ENCODE measurements at regions of chr4 and their contacts with region 1.

Region 1: DNA sequence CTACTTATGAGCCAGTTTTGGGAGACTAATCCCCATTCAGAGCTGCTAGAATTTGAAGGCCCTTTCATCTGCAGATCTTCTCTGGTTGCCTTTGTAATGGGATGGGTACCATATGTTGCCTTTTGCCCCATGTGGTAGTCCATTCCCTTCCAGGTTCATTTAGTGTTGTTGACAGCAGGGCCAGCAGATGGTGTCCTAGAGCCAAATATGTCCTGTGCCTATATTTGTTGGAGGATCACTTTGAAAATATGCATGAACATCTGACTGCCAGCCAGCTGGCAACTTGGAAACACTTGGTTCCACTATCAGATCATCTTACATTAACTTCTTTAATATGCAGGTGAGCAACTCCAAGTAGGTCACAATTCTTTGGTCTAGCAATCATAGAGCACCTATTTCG is 30.4 kb downstream of the CFAP299 start:
- DNase-seq: peak; percentile 26
- ATAC-seq: peak; percentile 91
- H3K4me3 ChIP-seq: no peak overlapping the region
- H3K27ac ChIP-seq: no peak overlapping the region
- H3K4me1 ChIP-seq: no peaks in the 10 kb centered on the region
- H3K27me3 ChIP-seq: no peaks in the 10 kb centered on the region
- CTCF ChIP-seq: peak; percentile 62 to 73 (median 67)
- EP300 ChIP-seq: no peak
- POLR2A ChIP-seq: no peak
- RAD21 ChIP-seq: peak; percentile 85

Region 2: DNA sequence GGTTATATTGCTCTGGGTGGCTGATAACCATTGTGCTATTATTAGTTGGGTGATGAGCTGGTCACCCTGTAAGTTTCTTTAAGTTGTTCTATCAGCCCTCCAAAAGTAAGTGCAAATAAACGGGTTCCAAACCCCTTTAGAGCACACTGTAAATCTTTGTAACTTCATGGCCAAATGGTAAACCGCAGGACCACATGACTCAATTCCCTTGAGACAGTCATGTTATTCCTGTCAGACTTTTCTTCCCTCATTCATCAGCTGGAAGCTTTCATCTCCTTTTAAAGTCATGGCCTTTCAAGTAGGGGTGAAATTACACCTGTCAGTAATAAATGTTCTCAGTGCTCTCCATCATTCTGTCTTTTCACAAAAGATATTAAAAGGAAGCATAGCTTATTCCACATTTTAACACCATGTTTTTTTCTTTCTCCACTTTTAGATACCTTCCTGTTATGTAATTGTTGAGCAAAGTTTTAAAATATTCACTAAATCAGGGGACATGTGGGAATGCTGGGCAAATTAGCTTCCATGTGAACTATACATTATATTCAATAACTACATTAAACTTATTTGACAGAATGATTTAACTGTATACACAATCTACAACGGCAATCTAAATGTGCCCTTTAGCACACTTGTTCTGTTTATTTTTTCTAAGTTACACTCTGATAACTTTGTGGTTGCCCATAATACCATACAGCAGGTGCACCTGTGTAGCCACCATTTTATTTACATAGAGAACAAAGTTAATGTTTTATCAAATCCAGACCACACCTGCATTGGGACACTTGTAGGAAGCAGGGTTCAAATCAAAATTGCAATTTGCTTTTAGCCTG is 245.1 kb after region 1 on chr4:
- CTCF ChIA-PET with region 1: interaction called, 4 read pairs
- POLR2A ChIA-PET with region 1: no interaction called
- RAD21 ChIA-PET with region 1: interaction called, 4 read pairs
- SMC1A ChIA-PET with region 1: interaction called, 3 read pairs
- in situ Hi-C with region 1: no loop called
- intact Hi-C with region 1: loop called (anchors 2 kb)
- DNase-seq: peak; percentile 63
- ATAC-seq: peak; percentile 94
- H3K4me3 ChIP-seq: no peak overlapping the region
- H3K27ac ChIP-seq: no peak overlapping the region
- H3K4me1 ChIP-seq: 0 out of 2 replicates have a peak, but pooled peaks cover 6% of the 10 kb centered on the region
- H3K27me3 ChIP-seq: no peaks in the 10 kb centered on the region
- CTCF ChIP-seq: no peak
- EP300 ChIP-seq: peak; percentile 56 to 65; a peak in 2 of 4 replicates
- POLR2A ChIP-seq: no peak
- RAD21 ChIP-seq: no peak

Region 3: GRCh38 chr4:80876810-80877209 is 510.9 kb after region 1 on chr4:
- CTCF ChIA-PET with region 1: no interaction called
- POLR2A ChIA-PET with region 1: no interaction called
- RAD21 ChIA-PET with region 1: interaction called, 3 read pairs
- SMC1A ChIA-PET with region 1: interaction called, 3 read pairs
- in situ Hi-C with region 1: no loop called
- intact Hi-C with region 1: loop called (anchors 10 kb)
- DNase-seq: peak; percentile 73
- ATAC-seq: peak; percentile 81
- H3K4me3 ChIP-seq: no peak overlapping the region
- H3K27ac ChIP-seq: peak overlapping the region; percentile 35
- H3K4me1 ChIP-seq: peaks cover 13% of the 10 kb centered on the region
- H3K27me3 ChIP-seq: no peaks in the 10 kb centered on the region
- CTCF ChIP-seq: no peak
- EP300 ChIP-seq: peak; percentile 45 to 85; a peak in 2 of 4 replicates
- POLR2A ChIP-seq: no peak
- RAD21 ChIP-seq: peak; percentile 15; the same call in 1 of the 2 replicates

Region 4: DNA sequence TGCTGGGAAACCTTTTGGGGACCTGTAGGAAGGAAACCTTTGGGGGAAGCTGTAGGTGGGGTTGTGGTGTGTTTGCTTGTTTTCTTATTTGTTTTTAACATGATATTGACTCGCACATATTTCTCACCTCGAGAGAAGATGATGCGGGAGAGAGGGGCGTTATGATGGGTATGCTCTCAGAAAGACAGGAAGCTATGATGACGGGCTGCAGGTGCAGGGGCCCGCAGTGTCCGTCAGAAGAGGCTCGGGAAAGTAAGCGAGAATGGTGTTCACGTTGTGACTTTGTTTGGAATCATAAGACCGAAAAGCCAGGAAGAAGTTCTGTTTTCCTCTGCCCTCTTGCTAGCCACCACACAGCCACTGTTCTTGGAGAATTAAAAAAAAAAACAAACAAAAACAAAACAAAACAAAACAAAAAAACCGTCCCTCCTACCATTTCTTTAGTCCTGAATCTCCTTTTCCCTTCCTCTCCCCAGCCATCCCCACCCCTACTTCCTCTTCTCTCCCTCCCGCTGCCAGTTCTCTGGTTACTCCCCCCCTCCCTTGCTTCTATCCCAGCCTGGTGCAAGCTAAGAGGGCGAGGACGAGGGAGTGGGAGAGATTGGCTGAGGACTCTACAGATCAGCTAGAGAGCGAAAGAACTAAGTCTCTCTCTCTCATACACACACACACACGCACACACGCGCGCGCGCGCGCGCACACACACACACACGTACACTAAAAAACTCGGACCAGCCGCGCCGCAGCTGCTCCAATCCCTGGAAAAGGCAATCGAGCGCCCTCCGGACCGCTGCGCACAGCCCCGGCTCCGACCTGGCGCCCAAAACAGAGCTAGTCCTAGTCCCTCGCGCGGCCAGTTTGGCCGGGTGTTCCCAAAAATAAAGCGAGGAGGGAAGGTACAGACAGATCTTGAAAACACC is 664.4 kb after region 1 on chr4 and contains the start of gene BMP3:
- CTCF ChIA-PET with region 1: interaction called, 268 read pairs
- POLR2A ChIA-PET with region 1: no interaction called
- RAD21 ChIA-PET with region 1: interaction called, 8 read pairs
- SMC1A ChIA-PET with region 1: interaction called, 15 read pairs
- in situ Hi-C with region 1: no loop called
- intact Hi-C with region 1: no loop called
- DNase-seq: no peak
- ATAC-seq: peak; percentile 61
- H3K4me3 ChIP-seq: peak within 1 kb of the TSS; percentile 65
- H3K27ac ChIP-seq: no peak within 1 kb of the TSS
- H3K4me1 ChIP-seq: no peaks in the 10 kb centered on the region
- H3K27me3 ChIP-seq: peaks cover 6 to 7% of the 10 kb centered on the region in 2 experiments; a peak in 3 of 4 replicates
- CTCF ChIP-seq: no peak
- EP300 ChIP-seq: no peak
- POLR2A ChIP-seq: no peak
- RAD21 ChIP-seq: no peak
- polyA plus RNA-seq, gene BMP3: 0.37 to 1.3 TPM

Region 5: DNA sequence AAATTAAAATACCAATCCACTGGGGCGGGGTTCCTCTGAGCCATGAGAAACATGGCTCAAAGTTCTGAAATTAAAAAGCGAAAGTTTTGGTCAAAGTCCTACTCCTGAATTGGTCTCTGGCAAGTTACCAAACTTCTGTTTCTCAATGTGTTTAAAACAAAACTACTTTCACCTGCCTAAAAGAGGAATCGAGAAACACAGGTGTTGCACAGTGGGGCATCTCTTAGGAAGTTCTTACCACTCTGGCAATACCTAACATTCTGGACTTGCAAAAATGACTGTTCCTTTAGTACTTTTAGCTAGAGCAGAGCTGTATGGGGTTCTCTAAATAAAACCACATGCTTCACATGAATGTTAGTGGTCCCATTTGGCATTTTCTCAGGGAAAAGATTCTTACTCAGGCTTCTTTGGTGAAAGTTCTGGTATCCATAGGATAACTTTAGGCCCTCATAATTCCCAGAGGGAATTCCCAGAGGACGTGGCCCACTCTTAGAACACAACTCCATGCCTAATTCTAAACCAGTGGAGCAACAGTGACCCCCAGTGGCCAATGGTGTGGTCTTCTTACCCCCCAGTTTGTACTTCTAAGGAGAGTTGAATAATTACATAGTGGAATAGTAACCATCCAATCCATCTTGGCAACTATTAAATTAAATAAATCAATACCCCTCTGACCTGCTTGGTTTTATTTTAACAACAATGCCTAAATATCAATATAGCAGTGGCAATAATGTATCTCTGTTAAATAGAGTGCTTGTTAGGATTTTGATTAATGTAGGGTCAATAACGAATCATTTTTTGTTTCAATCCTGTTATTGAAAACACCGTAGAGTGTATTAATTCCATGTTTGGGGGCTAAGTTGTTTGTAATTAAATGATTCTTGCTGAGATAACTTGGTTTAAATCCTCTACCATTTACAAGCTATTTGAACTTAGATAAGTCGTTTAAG is 686.5 kb after region 1 on chr4:
- CTCF ChIA-PET with region 1: interaction called, 117 read pairs
- POLR2A ChIA-PET with region 1: no interaction called
- RAD21 ChIA-PET with region 1: interaction called, 38 read pairs
- SMC1A ChIA-PET with region 1: interaction called, 32 read pairs
- in situ Hi-C with region 1: no loop called
- intact Hi-C with region 1: loop called (anchors 1 kb)
- DNase-seq: peak; percentile 91
- ATAC-seq: peak; percentile 99
- H3K4me3 ChIP-seq: no peak overlapping the region
- H3K27ac ChIP-seq: no peak overlapping the region; the same call in 1 of the 2 replicates
- H3K4me1 ChIP-seq: peaks cover 14% of the 10 kb centered on the region
- H3K27me3 ChIP-seq: no peaks in the 10 kb centered on the region
- CTCF ChIP-seq: peak; percentile 61 to 73 (median 66)
- EP300 ChIP-seq: peak; percentile 84 to 91; a peak in 3 of 4 replicates
- POLR2A ChIP-seq: no peak
- RAD21 ChIP-seq: peak; percentile 76

Region 6: GRCh38 chr4:81260443-81261101 is 894.6 kb after region 1 on chr4:
- CTCF ChIA-PET with region 1: interaction called, 3 read pairs
- POLR2A ChIA-PET with region 1: no interaction called
- RAD21 ChIA-PET with region 1: no interaction called
- SMC1A ChIA-PET with region 1: interaction called, 5 read pairs
- in situ Hi-C with region 1: no loop called
- intact Hi-C with region 1: loop called (anchors 10 kb)
- DNase-seq: no peak
- ATAC-seq: peak; percentile 46
- H3K4me3 ChIP-seq: no peak overlapping the region
- H3K27ac ChIP-seq: no peak overlapping the region
- H3K4me1 ChIP-seq: no peaks in the 10 kb centered on the region
- H3K27me3 ChIP-seq: no peaks in the 10 kb centered on the region
- CTCF ChIP-seq: peak; percentile 16 to 30 (median 28); a peak in 4 of 6 replicates
- EP300 ChIP-seq: no peak
- POLR2A ChIP-seq: no peak
- RAD21 ChIP-seq: 0 out of 2 replicates have a peak, but pooled peaks have one; percentile 3

Measured in GM12878 (cell line).